ENCODE measurements at regions of chr5 and their contacts with region 1.

Region 1: GRCh38 chr5:74640450-74640953 is at the start of gene ENC1:
- DNase-seq: peak; percentile 32 to 87
- H3K4me3 ChIP-seq: peak within 1 kb of the TSS; percentile 79 to 88
- H3K27ac ChIP-seq: peak within 1 kb of the TSS; percentile 45 to 62
- H3K4me1 ChIP-seq: peaks cover 0 to 5% of the 10 kb centered on the region in 2 donors
- H3K27me3 ChIP-seq: no peaks in the 10 kb centered on the region
- CTCF ChIP-seq: peak; percentile 38 to 68 (median 42)
- total RNA-seq, gene ENC1: 12.9 TPM

Region 2: DNA sequence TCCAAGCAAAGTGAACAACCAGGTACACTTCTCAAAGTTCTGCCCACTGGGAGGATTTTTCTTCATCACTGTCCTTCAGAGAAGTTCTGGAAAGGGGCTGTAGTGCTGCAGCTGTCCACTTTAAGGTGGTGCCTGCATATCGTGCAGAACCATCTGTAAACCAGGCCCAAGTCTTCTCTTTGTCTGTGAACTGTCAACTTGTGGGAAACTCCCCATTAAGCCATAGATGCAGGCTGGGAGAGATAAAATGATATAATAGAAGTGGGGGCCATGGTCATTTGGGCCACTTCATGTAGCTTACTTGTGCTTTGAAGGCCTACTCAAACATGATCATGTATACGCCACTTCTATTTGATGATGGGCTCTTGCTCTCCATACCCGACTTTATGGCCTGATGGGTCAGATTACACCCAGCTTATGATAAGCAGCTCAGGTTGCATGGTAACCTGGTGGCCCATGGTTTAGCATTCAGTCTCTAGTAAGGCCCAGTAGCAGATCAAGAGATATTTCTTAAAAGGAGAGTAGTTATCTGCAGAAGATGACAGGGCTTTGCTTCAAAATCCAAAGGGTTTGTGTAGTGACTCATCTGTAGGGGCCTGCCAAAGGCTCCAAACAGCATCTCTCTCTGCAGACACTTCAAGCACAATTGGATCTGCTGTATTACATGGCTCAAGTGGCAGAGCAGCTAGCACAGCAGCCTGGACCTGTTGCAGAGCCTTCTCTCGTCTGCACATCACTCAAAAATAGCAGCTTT is 1157.9 kb before region 1 on chr5:
- intact Hi-C with region 1: no loop called
- DNase-seq: no peak
- H3K4me3 ChIP-seq: no peak overlapping the region
- H3K27ac ChIP-seq: no peak overlapping the region
- H3K4me1 ChIP-seq: no peaks in the 10 kb centered on the region
- H3K27me3 ChIP-seq: no peaks in the 10 kb centered on the region
- CTCF ChIP-seq: no peak

Region 3: GRCh38 chr5:73792687-73793320 is 847.7 kb before region 1 on chr5:
- intact Hi-C with region 1: loop called (anchors 10 kb)
- DNase-seq: peak in 1 of 2 donors; percentile 85
- H3K4me3 ChIP-seq: no peak overlapping the region
- H3K27ac ChIP-seq: no peak overlapping the region
- H3K4me1 ChIP-seq: peaks cover 0 to 5% of the 10 kb centered on the region in 2 donors
- H3K27me3 ChIP-seq: no peaks in the 10 kb centered on the region
- CTCF ChIP-seq: peak; percentile 89 to 96 (median 95)

Region 4: DNA sequence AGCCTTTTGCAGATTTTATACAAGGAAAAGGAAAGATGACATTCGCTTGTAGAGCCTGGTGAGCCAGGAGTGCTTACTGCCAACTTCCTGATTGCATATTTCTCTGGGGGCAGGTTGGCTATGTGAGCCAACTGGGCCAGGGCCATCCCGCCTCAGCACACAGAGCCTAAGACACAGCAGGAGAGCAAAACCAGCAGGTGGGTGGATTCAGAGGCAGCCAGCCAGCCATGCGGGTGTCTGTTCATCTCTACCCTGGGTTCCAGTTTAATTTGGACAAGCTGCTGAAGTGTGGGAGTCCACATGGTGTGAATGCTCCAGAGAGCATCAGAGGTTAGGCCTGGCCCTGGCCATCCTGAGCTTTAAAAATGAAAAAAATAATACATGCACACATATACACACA is 723.1 kb before region 1 on chr5:
- intact Hi-C with region 1: loop called (anchors 5 kb)
- DNase-seq: no peak
- H3K4me3 ChIP-seq: no peak overlapping the region
- H3K27ac ChIP-seq: no peak overlapping the region
- H3K4me1 ChIP-seq: peaks cover 0 to 13% of the 10 kb centered on the region in 2 donors
- H3K27me3 ChIP-seq: no peaks in the 10 kb centered on the region
- CTCF ChIP-seq: no peak

Region 5: GRCh38 chr5:74035521-74035981 is 605.0 kb before region 1 on chr5:
- intact Hi-C with region 1: loop called (anchors 5 kb)
- DNase-seq: no peak
- H3K4me3 ChIP-seq: no peak overlapping the region
- H3K27ac ChIP-seq: no peak overlapping the region
- H3K4me1 ChIP-seq: no peaks in the 10 kb centered on the region
- H3K27me3 ChIP-seq: no peaks in the 10 kb centered on the region
- CTCF ChIP-seq: peak in 2 of 3 experiments; percentile 31 to 39

Region 6: GRCh38 chr5:74316064-74316679 is 324.3 kb before region 1 on chr5:
- intact Hi-C with region 1: loop called (anchors 5 kb)
- DNase-seq: peak; percentile 43 to 90
- H3K4me3 ChIP-seq: no peak overlapping the region
- H3K27ac ChIP-seq: peak overlapping the region; percentile 78 to 80
- H3K4me1 ChIP-seq: peaks cover 0 to 20% of the 10 kb centered on the region in 2 donors
- H3K27me3 ChIP-seq: no peaks in the 10 kb centered on the region
- CTCF ChIP-seq: no peak

Region 7: GRCh38 chr5:74684900-74685851 is 44.7 kb after region 1 on chr5 and contains the start of gene HEXB:
- intact Hi-C with region 1: no loop called
- DNase-seq: peak; percentile 58 to 95
- H3K4me3 ChIP-seq: peak within 1 kb of the TSS; percentile 76 to 92
- H3K27ac ChIP-seq: peak within 1 kb of the TSS; percentile 90 to 91
- H3K4me1 ChIP-seq: peaks cover 0 to 11% of the 10 kb centered on the region in 2 donors
- H3K27me3 ChIP-seq: no peaks in the 10 kb centered on the region
- CTCF ChIP-seq: no peak
- total RNA-seq, gene HEXB: 124 TPM